Mucosa of descending colon (tissue), 3 donors: ENCODE measurements at regions of chr12 and their contacts with region 1.

Region 1: GRCh38 chr12:14995583-14996425 is 23.0 kb downstream of the PDE6H start:
- DNase-seq: no peak
- ATAC-seq: peak; percentile 68
- H3K4me3 ChIP-seq: no peak overlapping the region
- H3K4me1 ChIP-seq: no peaks in the 10 kb centered on the region
- CTCF ChIP-seq: peak; percentile 30

Region 2: GRCh38 chr12:14629832-14630710 is 365.7 kb before region 1 on chr12:
- intact Hi-C with region 1: loop called in 1 of 2 experiments (anchors 10 kb)
- DNase-seq: peak in 2 of 3 donors; percentile 77 to 93
- ATAC-seq: peak; percentile 100
- H3K4me3 ChIP-seq: no peak overlapping the region
- H3K4me1 ChIP-seq: peaks cover 11% of the 10 kb centered on the region
- CTCF ChIP-seq: peak; percentile 84

Region 3: DNA sequence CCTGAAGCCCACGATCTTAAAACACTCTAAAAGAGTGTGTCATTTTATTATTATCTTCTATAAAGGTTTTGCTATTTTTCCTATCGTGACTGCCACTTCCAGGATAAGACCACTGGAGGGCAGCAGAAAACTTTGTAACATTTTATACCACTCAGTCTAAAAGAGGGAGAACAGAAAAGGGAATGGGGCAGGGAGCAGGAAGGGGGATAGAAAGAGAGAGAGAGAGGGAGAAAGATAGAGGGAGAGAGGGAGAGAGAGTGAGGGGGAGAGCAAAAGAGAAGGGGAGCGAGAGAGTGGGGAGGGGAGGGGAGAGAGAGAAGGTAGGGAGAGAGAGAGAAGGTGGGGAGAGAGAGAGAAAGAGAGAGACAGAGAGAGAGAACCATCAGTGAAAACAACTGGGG is 150.5 kb before region 1 on chr12:
- intact Hi-C with region 1: loop called (anchors 1 to 5 kb)
- DNase-seq: peak in 1 of 3 donors; percentile 77
- ATAC-seq: peak; percentile 75
- H3K4me3 ChIP-seq: no peak overlapping the region
- H3K4me1 ChIP-seq: peaks cover 20% of the 10 kb centered on the region
- CTCF ChIP-seq: peak; percentile 45

Region 4: DNA sequence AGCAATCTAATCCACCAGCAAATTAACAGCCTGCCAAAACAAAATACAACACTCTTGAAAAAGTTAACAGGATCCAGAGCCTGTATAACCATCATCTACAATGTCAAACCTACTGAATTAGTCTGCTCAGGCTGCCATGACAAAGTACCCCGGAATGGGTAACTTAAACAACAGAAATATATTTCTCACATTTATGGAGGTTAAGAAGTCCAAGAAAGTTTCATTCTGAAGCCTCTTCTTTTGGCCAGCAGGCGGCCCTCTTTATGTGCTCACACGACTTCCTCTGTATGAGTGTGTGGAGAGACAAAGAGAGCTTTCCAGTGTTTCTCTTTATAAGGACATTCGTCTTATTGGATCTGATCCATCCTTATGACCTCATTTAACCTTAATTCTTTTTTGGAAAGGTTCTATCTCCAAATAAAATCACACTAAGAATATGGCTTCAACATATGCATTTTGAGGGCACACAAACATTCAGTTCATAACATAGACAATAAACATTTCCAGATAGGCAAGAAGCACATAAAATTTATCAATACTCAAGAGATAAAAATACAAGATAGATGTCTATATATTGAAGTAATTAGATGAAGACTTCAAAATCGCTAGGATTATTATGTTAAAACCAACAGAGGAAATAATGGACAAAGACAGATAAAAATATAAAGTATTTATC is 231.3 kb after region 1 on chr12:
- intact Hi-C with region 1: no loop called
- DNase-seq: peak in 2 of 3 donors; percentile 36 to 75
- ATAC-seq: peak; percentile 67
- H3K4me3 ChIP-seq: no peak overlapping the region
- H3K4me1 ChIP-seq: no peaks in the 10 kb centered on the region
- CTCF ChIP-seq: no peak